A673 (cell line): ENCODE measurements at regions of chr5 and their contacts with region 1.

Region 1: DNA sequence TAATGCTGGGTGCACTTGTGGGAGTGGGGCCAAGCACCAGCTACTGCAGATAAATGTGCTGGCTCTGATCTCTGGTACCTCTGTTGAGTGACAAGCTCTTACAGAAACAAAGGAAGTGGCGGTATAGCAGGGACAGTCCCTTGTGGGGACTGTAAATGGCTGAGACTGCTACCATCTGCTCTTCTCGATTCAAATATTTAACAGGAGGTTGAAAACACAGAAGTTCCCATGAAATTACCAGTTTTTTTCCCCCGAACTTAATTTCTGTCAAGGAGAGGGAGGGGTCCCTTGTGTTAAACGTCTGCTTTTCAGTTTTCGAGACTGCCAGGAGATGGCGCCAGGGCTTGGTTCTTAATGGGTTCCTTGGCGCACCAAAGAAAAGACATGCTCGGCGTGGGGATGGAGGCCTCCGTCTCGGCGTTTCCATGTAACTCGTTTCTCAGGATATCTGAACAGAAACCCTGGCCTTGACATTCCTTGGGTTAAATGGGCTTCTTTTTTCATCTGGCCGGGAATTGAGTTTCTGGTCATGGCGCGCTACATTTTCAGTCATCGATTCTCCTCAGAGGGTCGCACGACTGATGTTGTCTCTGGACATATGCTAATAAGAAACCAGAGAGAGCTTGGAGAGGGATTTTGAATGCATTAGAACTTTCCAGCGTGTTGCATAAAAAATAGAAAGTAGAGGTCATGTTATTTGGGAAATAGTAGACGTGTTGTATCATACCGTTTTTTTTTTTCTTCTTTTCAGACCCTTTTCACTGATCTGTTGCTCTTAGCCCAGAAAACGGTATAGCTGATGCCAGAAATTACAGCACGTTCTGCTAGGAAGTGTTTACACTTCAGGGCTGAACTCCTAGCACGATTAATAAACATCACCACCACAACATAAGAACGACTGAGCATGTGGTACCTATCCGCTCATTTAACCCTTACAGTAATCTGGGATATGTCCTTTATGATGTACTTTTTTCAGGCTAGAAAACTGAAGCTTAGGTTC is 64.0 kb downstream of the CARTPT start:
- DNase-seq: peak; percentile 84
- H3K4me3 ChIP-seq: peak overlapping the region; percentile 7
- H3K27ac ChIP-seq: no peak overlapping the region
- H3K4me1 ChIP-seq: no peaks in the 10 kb centered on the region
- H3K27me3 ChIP-seq: no peaks in the 10 kb centered on the region
- CTCF ChIP-seq: peak; percentile 89

Region 2: GRCh38 chr5:71615809-71616208 is 167.3 kb before region 1 on chr5:
- CTCF ChIA-PET with region 1: no interaction called
- POLR2A ChIA-PET with region 1: no interaction called
- intact Hi-C with region 1: no loop called
- DNase-seq: no peak
- H3K4me3 ChIP-seq: no peak overlapping the region
- H3K27ac ChIP-seq: no peak overlapping the region
- H3K4me1 ChIP-seq: no peaks in the 10 kb centered on the region
- H3K27me3 ChIP-seq: no peaks in the 10 kb centered on the region
- CTCF ChIP-seq: no peak

Region 3: GRCh38 chr5:72108202-72109061 is 325.4 kb after region 1 on chr5:
- CTCF ChIA-PET with region 1: interaction called, 4 read pairs
- POLR2A ChIA-PET with region 1: no interaction called
- intact Hi-C with region 1: loop called (anchors 10 kb)
- DNase-seq: peak; percentile 85
- H3K4me3 ChIP-seq: peak overlapping the region; percentile 87
- H3K27ac ChIP-seq: peak overlapping the region; percentile 80
- H3K4me1 ChIP-seq: peaks cover 43% of the 10 kb centered on the region
- H3K27me3 ChIP-seq: no peaks in the 10 kb centered on the region
- CTCF ChIP-seq: no peak

Region 4: DNA sequence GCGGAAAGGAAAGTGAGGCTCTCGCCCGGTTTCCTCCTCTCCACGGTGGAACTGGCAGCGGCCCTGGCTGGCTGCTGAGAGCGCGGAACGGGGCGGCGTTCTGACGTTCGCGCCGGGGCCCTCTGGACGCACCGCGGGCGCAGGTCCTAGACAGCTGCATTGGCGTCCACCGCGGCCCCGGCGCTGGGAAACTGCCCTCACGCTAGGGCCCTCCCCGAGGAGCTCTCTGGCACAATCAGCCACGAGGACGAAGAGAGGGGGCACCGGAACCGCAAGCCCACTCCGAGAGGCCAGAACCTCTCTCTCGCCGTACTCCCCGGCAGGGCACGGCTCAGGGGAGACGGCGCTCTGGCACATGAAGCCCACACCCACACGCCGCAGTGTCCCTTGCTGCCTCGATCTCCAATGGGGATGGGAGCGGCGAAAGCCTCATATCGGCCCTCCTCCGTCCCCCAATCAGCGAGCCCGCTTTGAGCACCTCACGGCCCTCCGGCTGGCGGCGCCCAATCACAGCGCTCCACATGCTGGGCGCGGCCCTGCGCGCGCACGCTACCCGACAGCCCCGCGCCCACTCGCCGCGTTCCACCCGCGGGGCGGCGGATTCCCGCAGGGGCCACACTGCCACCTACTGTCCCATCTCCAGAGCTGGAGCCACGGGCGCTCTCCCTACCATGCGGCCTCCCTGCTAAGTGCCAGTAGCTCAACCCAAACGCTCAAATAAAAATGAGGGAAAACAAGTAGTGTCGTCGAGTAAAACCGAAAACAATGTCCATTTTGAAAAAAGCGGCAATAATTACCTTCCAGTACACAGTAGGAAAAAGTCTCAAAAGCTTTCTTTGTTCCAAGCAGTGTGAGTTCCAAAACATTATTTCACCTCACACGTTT is 525.1 kb after region 1 on chr5:
- CTCF ChIA-PET with region 1: interaction called, 7 read pairs
- POLR2A ChIA-PET with region 1: interaction called, 3 read pairs
- intact Hi-C with region 1: loop called (anchors 2 kb)
- DNase-seq: peak; percentile 99
- H3K4me3 ChIP-seq: peak overlapping the region; percentile 80
- H3K27ac ChIP-seq: peak overlapping the region; percentile 98
- H3K4me1 ChIP-seq: peaks cover 33% of the 10 kb centered on the region
- H3K27me3 ChIP-seq: no peaks in the 10 kb centered on the region
- CTCF ChIP-seq: peak; percentile 92

Region 5: GRCh38 chr5:72523960-72524582 is 741.0 kb after region 1 on chr5:
- CTCF ChIA-PET with region 1: interaction called, 4 read pairs
- POLR2A ChIA-PET with region 1: no interaction called
- intact Hi-C with region 1: loop called (anchors 2 kb)
- DNase-seq: peak; percentile 68
- H3K4me3 ChIP-seq: no peak overlapping the region
- H3K27ac ChIP-seq: no peak overlapping the region
- H3K4me1 ChIP-seq: no peaks in the 10 kb centered on the region
- H3K27me3 ChIP-seq: no peaks in the 10 kb centered on the region
- CTCF ChIP-seq: peak; percentile 70